Colonic mucosa (tissue), 4 donors: ENCODE measurements at regions of chr5 and their contacts with region 1.

Region 1: GRCh38 chr5:168047043-168047668 is 244.3 kb upstream of the WWC1 start:
- DNase-seq: peak; percentile 70
- H3K4me3 ChIP-seq: no peak overlapping the region
- H3K27ac ChIP-seq: no peak overlapping the region
- H3K4me1 ChIP-seq: no peaks in the 10 kb centered on the region
- H3K27me3 ChIP-seq: no peaks in the 10 kb centered on the region
- CTCF ChIP-seq: peak; percentile 43

Region 2: GRCh38 chr5:166961039-166961438 is 1086.1 kb before region 1 on chr5:
- intact Hi-C with region 1: loop called (anchors 10 kb)
- DNase-seq: no peak
- H3K4me3 ChIP-seq: no peak overlapping the region
- H3K27ac ChIP-seq: no peak overlapping the region
- H3K4me1 ChIP-seq: no peaks in the 10 kb centered on the region
- H3K27me3 ChIP-seq: no peaks in the 10 kb centered on the region
- CTCF ChIP-seq: peak; percentile 16

Region 3: DNA sequence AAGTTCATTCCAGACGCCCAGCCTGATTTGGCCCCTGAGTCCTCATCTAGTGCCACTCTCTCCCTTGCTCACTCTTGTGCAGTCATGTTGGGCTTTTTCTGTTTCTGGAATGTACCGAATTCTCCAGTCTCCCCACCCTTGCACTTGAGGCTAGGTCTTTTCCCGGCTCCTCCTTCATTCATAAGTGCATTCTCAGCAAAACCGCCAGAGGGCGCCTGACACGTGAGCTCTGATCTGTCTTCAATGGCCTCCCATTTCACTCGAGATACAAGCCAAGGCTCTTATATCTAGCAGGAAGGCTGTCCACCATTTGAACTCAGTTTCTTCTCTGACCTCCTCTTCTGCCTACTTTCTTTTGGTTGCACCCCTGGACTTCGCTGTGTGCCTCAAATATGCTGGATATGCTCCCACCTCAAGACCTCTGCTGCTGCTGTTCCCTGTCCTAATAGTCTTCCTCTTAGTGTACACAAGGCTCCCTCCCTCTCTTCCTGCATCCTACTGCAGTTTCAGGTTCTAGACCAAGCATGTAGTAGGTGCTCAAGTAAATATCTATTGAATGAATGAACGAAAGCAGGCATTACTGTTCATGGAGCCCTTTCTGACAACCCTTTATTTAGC is 323.8 kb before region 1 on chr5:
- intact Hi-C with region 1: loop called (anchors 2 kb)
- DNase-seq: peak; percentile 73
- H3K4me3 ChIP-seq: no peak overlapping the region
- H3K27ac ChIP-seq: no peak overlapping the region
- H3K4me1 ChIP-seq: no peaks in the 10 kb centered on the region
- H3K27me3 ChIP-seq: no peaks in the 10 kb centered on the region
- CTCF ChIP-seq: peak; percentile 90

Region 4: DNA sequence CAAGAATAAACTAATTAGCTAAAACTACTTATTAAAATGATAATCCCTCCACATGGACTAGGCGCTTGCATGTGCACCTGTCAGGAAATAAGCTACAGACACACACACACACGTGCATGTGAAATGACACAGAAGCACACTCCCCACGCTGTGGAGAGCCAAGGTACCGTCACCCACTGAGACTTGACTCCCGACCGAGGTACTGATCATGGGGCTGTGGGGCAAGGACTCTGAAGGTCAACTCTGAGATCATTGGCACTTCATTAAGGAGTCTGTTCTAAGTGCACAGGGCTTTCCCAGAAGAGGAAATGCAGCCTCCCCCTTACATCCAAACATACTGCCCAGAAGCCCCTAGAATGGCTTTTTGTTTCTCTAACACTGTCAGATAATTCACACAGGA is 20.1 kb before region 1 on chr5:
- intact Hi-C with region 1: no loop called
- DNase-seq: no peak
- H3K4me3 ChIP-seq: no peak overlapping the region
- H3K27ac ChIP-seq: no peak overlapping the region
- H3K4me1 ChIP-seq: no peaks in the 10 kb centered on the region
- H3K27me3 ChIP-seq: no peaks in the 10 kb centered on the region
- CTCF ChIP-seq: no peak